CD14-positive monocyte (primary cell): ENCODE measurements at regions of chr19 and their contacts with region 1.

Region 1: GRCh38 chr19:18000935-18001778 is 6.8 kb upstream of the ARRDC2 start:
- DNase-seq: peak; percentile 94 to 95 (median 94)
- H3K4me3 ChIP-seq: peak overlapping the region; percentile 83 to 87 (median 85)
- H3K4me3 Mint-ChIP-seq: peak overlapping the region; percentile 90 to 92
- H3K27ac ChIP-seq: peak overlapping the region; percentile 80 to 85
- H3K27ac Mint-ChIP-seq: peak overlapping the region; percentile 95 to 98 (median 96)
- H3K4me1 ChIP-seq: peaks cover 27 to 41% of the 10 kb centered on the region in 2 donors
- H3K4me1 Mint-ChIP-seq: peaks cover 29% of the 10 kb centered on the region
- H3K27me3 ChIP-seq: no peaks in the 10 kb centered on the region
- H3K27me3 Mint-ChIP-seq: peaks cover 0 to 4% (median 0%) of the 10 kb centered on the region in 3 donors
- CTCF ChIP-seq: no peak

Region 2: GRCh38 chr19:17834350-17835181 is 166.6 kb before region 1 on chr19:
- intact Hi-C with region 1: no loop called
- DNase-seq: no peak
- H3K4me3 ChIP-seq: no peak overlapping the region
- H3K4me3 Mint-ChIP-seq: no peak overlapping the region
- H3K27ac ChIP-seq: no peak overlapping the region
- H3K27ac Mint-ChIP-seq: no peak overlapping the region
- H3K4me1 ChIP-seq: no peaks in the 10 kb centered on the region
- H3K4me1 Mint-ChIP-seq: no peaks in the 10 kb centered on the region
- H3K27me3 ChIP-seq: no peaks in the 10 kb centered on the region
- H3K27me3 Mint-ChIP-seq: no peaks in the 10 kb centered on the region
- CTCF ChIP-seq: no peak

Region 3: GRCh38 chr19:17947815-17948513 is 53.2 kb before region 1 on chr19:
- intact Hi-C with region 1: loop called in 1 of 2 experiments (anchors 2 kb)
- DNase-seq: peak; percentile 91 to 96 (median 93)
- H3K4me3 ChIP-seq: peak overlapping the region; percentile 11 to 80 (median 54)
- H3K4me3 Mint-ChIP-seq: peak overlapping the region; percentile 85 to 91
- H3K27ac ChIP-seq: peak overlapping the region; percentile 58 to 61
- H3K27ac Mint-ChIP-seq: peak overlapping the region in 4 of 7 donors; percentile 35 to 88 (median 58)
- H3K4me1 ChIP-seq: peaks cover 48 to 55% of the 10 kb centered on the region in 2 donors
- H3K4me1 Mint-ChIP-seq: peaks cover 52% of the 10 kb centered on the region
- H3K27me3 ChIP-seq: peaks cover 32 to 44% of the 10 kb centered on the region in 2 donors
- H3K27me3 Mint-ChIP-seq: peaks cover 43 to 53% (median 48%) of the 10 kb centered on the region in 3 donors
- CTCF ChIP-seq: no peak

Region 4: DNA sequence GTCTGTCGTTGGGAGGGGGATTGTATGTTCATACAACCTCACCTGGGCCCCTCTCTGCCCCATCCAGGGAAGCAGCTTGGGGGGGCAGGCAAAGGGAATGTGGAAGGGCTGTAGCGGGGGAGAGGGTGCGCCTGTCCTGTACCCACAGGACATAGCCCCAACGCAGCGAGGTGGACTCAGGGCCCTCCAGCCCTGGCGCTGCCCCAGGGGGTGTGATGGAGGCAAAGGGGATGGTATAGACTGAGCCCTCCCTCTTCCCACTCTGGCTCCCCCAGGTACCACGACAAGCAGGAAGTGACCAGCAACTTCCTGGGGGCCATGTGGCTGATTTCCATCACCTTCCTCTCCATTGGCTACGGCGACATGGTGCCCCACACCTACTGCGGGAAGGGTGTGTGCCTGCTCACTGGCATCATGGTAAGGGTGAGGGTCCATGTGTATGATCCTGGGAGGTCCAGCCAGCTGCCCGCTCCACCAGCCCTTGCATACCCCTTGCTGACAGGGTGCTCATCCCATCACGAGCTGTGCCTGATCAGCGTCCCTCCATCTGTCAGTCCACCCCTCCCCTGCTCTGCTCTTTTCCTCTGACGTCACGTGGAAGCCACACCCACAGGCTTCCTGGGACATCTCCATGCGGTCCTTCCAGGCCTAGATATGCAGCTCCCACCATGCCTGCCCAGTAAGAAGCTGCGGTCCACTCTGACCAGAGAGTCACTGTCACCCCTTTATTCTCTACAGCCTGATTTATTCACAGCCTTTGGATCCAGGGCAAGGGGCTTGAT is 15.9 kb before region 1 on chr19:
- intact Hi-C with region 1: no loop called
- DNase-seq: no peak
- H3K4me3 ChIP-seq: no peak overlapping the region
- H3K4me3 Mint-ChIP-seq: no peak overlapping the region
- H3K27ac ChIP-seq: no peak overlapping the region
- H3K27ac Mint-ChIP-seq: peak overlapping the region in 1 of 7 donors; percentile 23
- H3K4me1 ChIP-seq: no peaks in the 10 kb centered on the region
- H3K4me1 Mint-ChIP-seq: peaks cover 3% of the 10 kb centered on the region
- H3K27me3 ChIP-seq: no peaks in the 10 kb centered on the region
- H3K27me3 Mint-ChIP-seq: peaks cover 5 to 9% (median 6%) of the 10 kb centered on the region in 3 donors
- CTCF ChIP-seq: no peak

Region 5: GRCh38 chr19:18141031-18141430 is 139.9 kb after region 1 on chr19:
- intact Hi-C with region 1: no loop called
- DNase-seq: no peak
- H3K4me3 ChIP-seq: no peak overlapping the region
- H3K4me3 Mint-ChIP-seq: no peak overlapping the region
- H3K27ac ChIP-seq: no peak overlapping the region
- H3K27ac Mint-ChIP-seq: no peak overlapping the region
- H3K4me1 ChIP-seq: peaks cover 9 to 12% of the 10 kb centered on the region in 2 donors
- H3K4me1 Mint-ChIP-seq: peaks cover 6% of the 10 kb centered on the region
- H3K27me3 ChIP-seq: no peaks in the 10 kb centered on the region
- H3K27me3 Mint-ChIP-seq: peaks cover 0 to 5% (median 3%) of the 10 kb centered on the region in 3 donors
- CTCF ChIP-seq: no peak